Panc1 (cell line): ENCODE measurements at regions of chr4 and their contacts with region 1.

Region 1: DNA sequence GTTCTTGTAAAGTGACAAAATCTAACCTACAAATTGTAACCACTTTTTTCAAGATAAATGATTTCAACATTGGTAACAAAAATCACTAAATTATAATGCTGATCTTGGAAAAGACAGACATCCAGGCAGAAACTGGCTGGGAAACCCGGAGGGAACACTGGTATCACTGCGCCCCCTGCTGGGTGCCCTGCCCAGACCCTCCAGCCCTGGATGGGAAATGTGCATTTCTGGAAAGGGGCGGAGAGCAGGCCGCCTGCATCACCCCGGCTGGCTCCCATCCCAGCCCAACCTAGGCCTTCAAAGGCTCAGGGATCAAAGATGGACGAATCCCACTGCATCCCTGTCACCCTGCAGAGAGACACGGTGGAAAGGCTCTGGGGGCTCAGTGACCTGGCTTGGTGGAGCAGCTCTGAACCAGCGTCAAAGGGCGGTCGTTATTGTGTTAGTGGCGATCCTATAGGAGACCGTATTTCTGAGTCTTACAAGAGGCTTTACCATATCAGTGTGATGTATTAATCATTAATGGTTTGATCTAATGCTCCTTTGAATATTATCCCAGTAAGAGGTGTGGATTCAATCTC is 37.3 kb downstream of the ACOX3 start:
- DNase-seq: no peak
- ATAC-seq: peak; percentile 95
- H3K4me3 ChIP-seq: no peak overlapping the region
- H3K27ac ChIP-seq: no peak overlapping the region
- H3K4me1 ChIP-seq: no peaks in the 10 kb centered on the region
- H3K27me3 ChIP-seq: no peaks in the 10 kb centered on the region
- CTCF ChIP-seq: peak; percentile 89

Region 2: DNA sequence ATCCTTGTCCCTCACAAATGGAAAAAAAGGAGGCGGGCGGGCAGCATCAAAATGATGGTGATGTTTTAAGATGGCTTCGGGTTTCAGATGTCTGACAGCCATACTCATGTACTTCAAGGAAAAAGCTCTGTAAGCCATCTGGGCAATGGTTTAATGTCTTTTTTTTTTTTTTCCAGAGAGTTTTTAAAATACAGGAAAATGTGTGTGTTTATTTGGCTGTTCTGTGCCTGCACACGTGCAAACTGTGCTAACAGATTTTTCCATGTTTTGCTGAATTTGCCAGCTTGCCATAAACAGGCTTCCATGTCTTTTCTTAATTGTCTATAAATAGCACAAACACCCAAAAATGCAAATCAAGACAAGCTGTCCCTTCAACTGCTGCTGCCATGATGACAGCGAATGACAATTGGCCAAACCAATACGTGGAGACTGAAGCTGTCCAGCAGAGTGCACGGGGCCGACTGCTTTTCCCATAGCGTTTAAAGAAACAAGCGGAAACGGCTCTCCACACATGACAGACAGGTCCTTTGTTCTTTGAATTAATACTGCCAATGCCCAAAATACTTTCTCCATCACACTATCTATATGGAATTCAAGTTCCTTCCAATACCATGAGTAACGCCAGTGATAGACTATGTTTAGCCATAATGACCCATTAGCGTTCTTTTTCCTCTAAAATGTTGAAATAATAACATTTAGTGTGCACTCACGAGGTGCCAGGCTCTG is 499.3 kb before region 1 on chr4:
- CTCF ChIA-PET with region 1: no interaction called
- POLR2A ChIA-PET with region 1: no interaction called
- in situ Hi-C with region 1: no loop called
- intact Hi-C with region 1: no loop called
- DNase-seq: no peak
- ATAC-seq: 0 out of 2 replicates have a peak, but pooled peaks have one; percentile 38
- H3K4me3 ChIP-seq: no peak overlapping the region
- H3K27ac ChIP-seq: peak overlapping the region; percentile 95
- H3K4me1 ChIP-seq: peaks cover 99% of the 10 kb centered on the region
- H3K27me3 ChIP-seq: no peaks in the 10 kb centered on the region
- CTCF ChIP-seq: no peak

Region 3: DNA sequence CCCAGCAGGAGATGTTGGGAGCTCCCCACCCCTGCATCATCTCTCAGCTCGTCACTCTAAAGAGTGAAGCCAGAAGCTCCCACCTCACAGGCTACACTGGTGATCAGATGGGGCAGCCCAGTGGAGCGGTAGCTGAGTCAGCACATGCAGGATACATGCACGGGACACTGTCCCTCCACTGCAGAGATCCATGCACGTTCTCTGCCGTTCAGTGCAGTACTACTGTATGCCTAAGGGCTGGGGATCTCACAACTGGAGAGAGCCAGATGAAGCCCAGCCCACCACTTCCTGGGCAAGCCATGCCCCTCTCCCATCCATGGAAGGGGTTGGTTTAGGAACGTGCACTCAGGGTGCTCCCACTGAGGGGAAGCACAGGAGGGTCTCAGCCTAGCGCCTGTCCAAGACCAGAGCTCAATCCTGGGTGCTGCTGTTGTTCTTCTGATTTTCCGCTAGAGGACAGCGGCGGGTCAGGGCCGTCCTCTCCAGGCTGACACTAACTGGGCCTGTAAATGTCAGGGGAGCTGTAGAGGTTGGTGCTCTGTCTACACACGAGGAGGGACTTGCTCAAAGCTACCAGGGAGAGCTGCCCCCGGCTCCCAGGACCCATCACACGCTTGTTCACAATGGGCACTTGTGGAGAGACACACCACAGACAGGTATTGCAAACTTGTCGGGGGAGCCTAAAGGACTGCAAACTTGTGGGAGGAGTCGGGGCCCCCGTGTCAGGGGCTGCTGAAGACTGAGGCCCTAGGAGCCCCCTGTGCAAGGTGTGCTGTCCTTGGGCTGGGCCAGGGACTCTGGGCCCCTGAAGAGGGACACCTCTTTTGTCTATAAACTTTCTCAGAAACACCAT is 226.5 kb before region 1 on chr4:
- CTCF ChIA-PET with region 1: interaction called, 6 read pairs
- POLR2A ChIA-PET with region 1: no interaction called
- in situ Hi-C with region 1: no loop called
- intact Hi-C with region 1: loop called (anchors 10 kb)
- DNase-seq: peak; percentile 42
- ATAC-seq: peak; percentile 93
- H3K4me3 ChIP-seq: no peak overlapping the region
- H3K27ac ChIP-seq: no peak overlapping the region
- H3K4me1 ChIP-seq: no peaks in the 10 kb centered on the region
- H3K27me3 ChIP-seq: no peaks in the 10 kb centered on the region
- CTCF ChIP-seq: peak; percentile 93

Region 4: GRCh38 chr4:8241895-8242696 is 161.2 kb before region 1 on chr4:
- CTCF ChIA-PET with region 1: interaction called, 5 read pairs
- POLR2A ChIA-PET with region 1: no interaction called
- in situ Hi-C with region 1: no loop called
- intact Hi-C with region 1: loop called (anchors 2 kb)
- DNase-seq: peak; percentile 15
- ATAC-seq: peak; percentile 92
- H3K4me3 ChIP-seq: no peak overlapping the region
- H3K27ac ChIP-seq: no peak overlapping the region
- H3K4me1 ChIP-seq: no peaks in the 10 kb centered on the region; the same call in 1 of the 2 replicates
- H3K27me3 ChIP-seq: no peaks in the 10 kb centered on the region
- CTCF ChIP-seq: peak; percentile 93